B cell (primary cell): ENCODE measurements at regions of chr9 and their contacts with region 1.

Region 1: GRCh38 chr9:122912964-122913673 is at the start of gene ZBTB6:
- DNase-seq: peak; percentile 92
- ATAC-seq: peak; percentile 93
- H3K4me3 ChIP-seq: peak within 1 kb of the TSS; percentile 68 to 92 (median 83)
- H3K4me3 Mint-ChIP-seq: peak within 1 kb of the TSS; percentile 89
- H3K27ac ChIP-seq: peak within 1 kb of the TSS; percentile 81
- H3K27ac Mint-ChIP-seq: peak within 1 kb of the TSS; percentile 97
- H3K4me1 ChIP-seq: peaks cover 13 to 16% of the 10 kb centered on the region in 2 donors
- H3K4me1 Mint-ChIP-seq: peaks cover 25% of the 10 kb centered on the region
- H3K27me3 ChIP-seq: no peaks in the 10 kb centered on the region
- H3K27me3 Mint-ChIP-seq: no peaks in the 10 kb centered on the region
- CTCF ChIP-seq: no peak
- total RNA-seq, gene ZBTB6: 18.9 and 19.9 TPM in 2 replicates

Region 2: DNA sequence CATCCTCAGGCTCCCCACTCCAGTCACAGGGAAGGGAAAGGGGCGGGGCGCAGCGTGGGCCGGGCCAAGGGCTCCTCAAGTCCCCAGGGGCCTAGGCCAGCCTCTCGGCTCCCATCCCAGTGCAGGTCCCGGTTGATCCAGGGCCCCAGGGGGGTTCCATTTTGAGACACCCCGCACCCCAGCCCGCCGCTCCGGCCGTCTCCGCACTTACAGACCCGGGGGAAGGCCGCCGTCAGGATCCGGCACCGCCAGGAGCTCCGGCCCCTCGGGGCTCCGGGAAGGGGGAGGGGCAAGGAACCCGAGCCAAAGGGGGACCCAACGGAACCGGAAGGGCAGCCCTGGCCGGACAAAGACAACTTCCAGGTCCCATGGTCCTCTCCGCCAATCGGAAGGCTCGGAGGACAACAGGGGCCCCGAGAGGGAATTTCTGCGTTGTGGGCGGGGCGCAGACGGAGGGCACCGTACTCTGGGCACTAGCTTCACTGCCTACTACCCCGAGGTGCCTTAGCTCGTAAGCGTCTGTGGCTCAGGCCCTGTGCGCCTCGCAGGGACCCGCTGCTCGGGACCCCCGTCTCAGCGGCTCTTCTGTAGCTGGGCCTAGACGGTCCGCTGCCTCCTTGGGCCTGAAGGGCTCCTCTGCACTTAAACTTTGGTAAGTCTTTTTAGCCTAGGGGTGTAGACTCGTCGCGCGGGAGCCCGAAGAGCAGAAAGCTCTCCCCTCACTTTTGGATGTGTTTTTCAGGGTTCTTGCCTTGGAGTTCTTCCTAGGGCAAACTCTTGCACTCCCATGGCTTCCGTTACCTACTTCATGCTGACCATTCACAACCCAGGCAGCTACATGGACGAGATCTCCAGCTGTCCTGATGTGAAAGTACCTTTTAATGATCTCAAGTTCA is 18.4 kb after region 1 on chr9 and contains the start of gene ZBTB26:
- CTCF ChIA-PET with region 1: interaction called, 11 read pairs
- POLR2A ChIA-PET with region 1: interaction called, 22 read pairs
- intact Hi-C with region 1: loop called (anchors 1 kb)
- DNase-seq: peak; percentile 93
- ATAC-seq: peak; percentile 98
- H3K4me3 ChIP-seq: peak within 1 kb of the TSS; percentile 72 to 96 (median 91)
- H3K4me3 Mint-ChIP-seq: no peak within 1 kb of the TSS
- H3K27ac ChIP-seq: peak within 1 kb of the TSS; percentile 75 to 93
- H3K27ac Mint-ChIP-seq: peak within 1 kb of the TSS; percentile 91
- H3K4me1 ChIP-seq: peaks cover 19 to 24% of the 10 kb centered on the region in 2 donors
- H3K4me1 Mint-ChIP-seq: peaks cover 21% of the 10 kb centered on the region
- H3K27me3 ChIP-seq: no peaks in the 10 kb centered on the region
- H3K27me3 Mint-ChIP-seq: no peaks in the 10 kb centered on the region
- CTCF ChIP-seq: no peak
- total RNA-seq, gene ZBTB26: 16.4 and 17.2 TPM in 2 replicates